Sigmoid colon (tissue), 7 donors: ENCODE measurements at regions of chr17 and their contacts with region 1.

Region 1: GRCh38 chr17:32755045-32755805 is 121.7 kb downstream of the MYO1D start:
- DNase-seq: no peak
- H3K4me3 ChIP-seq: no peak overlapping the region
- H3K27ac ChIP-seq: no peak overlapping the region
- H3K4me1 ChIP-seq: no peaks in the 10 kb centered on the region
- H3K27me3 ChIP-seq: no peaks in the 10 kb centered on the region
- CTCF ChIP-seq: peak in 3 of 4 experiments; percentile 14 to 26 (median 15)
- EP300 ChIP-seq: no peak
- POLR2A ChIP-seq: no peak

Region 2: GRCh38 chr17:32461853-32462617 is 293.2 kb before region 1 on chr17:
- intact Hi-C with region 1: loop called (anchors 5 kb)
- DNase-seq: no peak
- H3K4me3 ChIP-seq: no peak overlapping the region
- H3K27ac ChIP-seq: no peak overlapping the region
- H3K4me1 ChIP-seq: peaks cover 0 to 5% (median 0%) of the 10 kb centered on the region in 4 donors
- H3K27me3 ChIP-seq: no peaks in the 10 kb centered on the region
- CTCF ChIP-seq: peak in 3 of 4 experiments; percentile 8 to 42 (median 15)
- EP300 ChIP-seq: no peak
- POLR2A ChIP-seq: no peak

Region 3: DNA sequence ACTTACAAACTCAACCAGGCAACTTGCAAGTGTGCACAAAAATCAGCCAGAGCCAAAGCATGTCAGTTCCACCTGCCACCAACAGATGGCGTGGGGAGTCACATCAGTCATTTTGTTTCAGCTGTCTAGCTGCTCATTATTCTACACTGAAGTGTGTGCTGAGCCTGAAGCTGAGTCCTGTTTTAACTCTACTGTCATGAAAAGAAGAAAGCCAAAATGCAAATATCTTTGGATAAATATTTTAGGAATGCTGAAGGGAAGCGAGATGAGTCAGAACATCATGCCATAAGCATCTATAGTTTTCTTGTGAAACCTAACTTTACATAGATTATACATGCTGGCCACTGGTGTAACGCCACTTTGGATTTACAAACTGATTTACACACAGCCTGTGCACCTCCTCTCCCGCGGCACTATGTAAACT is 95.8 kb before region 1 on chr17:
- intact Hi-C with region 1: loop called (anchors 5 kb)
- DNase-seq: peak; percentile 71
- H3K4me3 ChIP-seq: no peak overlapping the region
- H3K27ac ChIP-seq: no peak overlapping the region
- H3K4me1 ChIP-seq: no peaks in the 10 kb centered on the region
- H3K27me3 ChIP-seq: no peaks in the 10 kb centered on the region
- CTCF ChIP-seq: peak; percentile 8 to 86 (median 72)
- EP300 ChIP-seq: no peak
- POLR2A ChIP-seq: no peak